Vagina (tissue), 2 donors: ENCODE measurements at regions of chr4 and their contacts with region 1.

Region 1: DNA sequence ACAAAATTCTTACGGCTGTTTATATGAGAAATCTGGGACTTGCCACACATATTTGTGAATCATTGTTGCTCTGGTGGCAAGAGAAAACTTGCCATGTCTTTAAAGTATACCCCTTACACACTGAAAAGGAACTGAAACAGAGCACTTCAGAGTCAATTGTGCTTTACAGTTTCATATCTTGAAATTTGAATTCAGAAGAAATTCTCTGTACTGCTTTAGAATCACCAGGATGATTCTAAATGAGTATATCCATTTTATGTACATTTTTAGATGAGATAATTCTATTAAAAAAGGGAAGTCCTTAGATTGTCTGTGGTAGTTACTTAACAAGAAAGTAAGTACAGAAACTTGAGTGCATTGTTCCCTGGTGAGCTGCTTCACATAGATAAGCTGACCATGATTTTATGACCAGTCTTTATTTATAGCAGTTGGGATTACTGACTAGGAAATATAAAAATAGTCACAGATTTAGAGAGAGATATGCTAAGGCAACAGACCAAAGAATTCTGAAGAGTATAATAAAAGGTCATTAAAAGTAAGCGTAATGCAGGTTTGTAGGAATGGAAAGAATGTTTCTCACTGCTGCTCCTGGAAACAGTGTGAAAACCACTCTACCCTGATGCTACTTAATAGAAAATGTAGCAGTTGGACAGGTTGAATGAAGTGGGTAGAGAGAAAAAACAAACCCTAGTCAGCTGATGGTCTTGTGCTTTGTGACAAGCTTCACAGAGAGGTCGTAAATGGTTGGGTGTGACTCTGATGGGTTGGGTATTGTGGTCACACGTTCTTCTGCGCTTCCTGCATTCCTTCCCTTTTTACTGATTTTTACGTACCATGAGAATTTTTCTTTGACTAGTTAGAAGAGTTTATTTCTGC is 41.0 kb downstream of the FNIP2 start:
- DNase-seq: no peak
- H3K4me3 ChIP-seq: peak overlapping the region in 1 of 2 donors; percentile 9
- H3K27ac ChIP-seq: peak overlapping the region; percentile 82
- H3K4me1 ChIP-seq: peaks cover 65% of the 10 kb centered on the region
- H3K27me3 ChIP-seq: no peaks in the 10 kb centered on the region
- CTCF ChIP-seq: no peak
- POLR2A ChIP-seq: no peak

Region 2: DNA sequence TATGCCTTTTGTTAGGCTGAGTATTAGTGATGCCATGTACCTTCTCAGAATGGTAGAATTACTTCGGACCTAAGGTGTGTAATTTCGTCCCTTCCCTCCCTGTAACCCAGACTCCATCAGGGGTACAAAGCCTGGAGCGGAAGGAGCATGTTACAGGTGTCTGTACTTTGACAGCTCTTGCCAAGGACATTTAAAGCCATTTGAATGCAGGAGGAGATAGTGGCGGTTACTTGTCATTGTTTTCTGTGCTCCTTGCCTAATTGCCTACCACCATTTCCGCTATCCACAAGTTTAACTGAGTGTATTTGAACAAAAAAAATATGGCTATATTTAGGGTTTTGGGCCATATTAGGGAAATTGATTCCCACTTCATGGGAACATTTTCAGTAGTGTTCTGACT is 39.2 kb before region 1 on chr4:
- intact Hi-C with region 1: loop called (anchors 5 kb)
- DNase-seq: no peak
- H3K4me3 ChIP-seq: peak overlapping the region in 1 of 2 donors; percentile 94
- H3K27ac ChIP-seq: no peak overlapping the region
- H3K4me1 ChIP-seq: peaks cover 61% of the 10 kb centered on the region
- H3K27me3 ChIP-seq: no peaks in the 10 kb centered on the region
- CTCF ChIP-seq: no peak
- POLR2A ChIP-seq: no peak

Region 3: GRCh38 chr4:158996669-158997074 is 186.8 kb after region 1 on chr4:
- intact Hi-C with region 1: no loop called
- DNase-seq: no peak
- H3K4me3 ChIP-seq: no peak overlapping the region
- H3K27ac ChIP-seq: no peak overlapping the region
- H3K4me1 ChIP-seq: no peaks in the 10 kb centered on the region
- H3K27me3 ChIP-seq: no peaks in the 10 kb centered on the region
- CTCF ChIP-seq: no peak
- POLR2A ChIP-seq: no peak